Transverse colon (tissue), 4 donors: ENCODE measurements at regions of chr11 and their contacts with region 1.

Region 1: DNA sequence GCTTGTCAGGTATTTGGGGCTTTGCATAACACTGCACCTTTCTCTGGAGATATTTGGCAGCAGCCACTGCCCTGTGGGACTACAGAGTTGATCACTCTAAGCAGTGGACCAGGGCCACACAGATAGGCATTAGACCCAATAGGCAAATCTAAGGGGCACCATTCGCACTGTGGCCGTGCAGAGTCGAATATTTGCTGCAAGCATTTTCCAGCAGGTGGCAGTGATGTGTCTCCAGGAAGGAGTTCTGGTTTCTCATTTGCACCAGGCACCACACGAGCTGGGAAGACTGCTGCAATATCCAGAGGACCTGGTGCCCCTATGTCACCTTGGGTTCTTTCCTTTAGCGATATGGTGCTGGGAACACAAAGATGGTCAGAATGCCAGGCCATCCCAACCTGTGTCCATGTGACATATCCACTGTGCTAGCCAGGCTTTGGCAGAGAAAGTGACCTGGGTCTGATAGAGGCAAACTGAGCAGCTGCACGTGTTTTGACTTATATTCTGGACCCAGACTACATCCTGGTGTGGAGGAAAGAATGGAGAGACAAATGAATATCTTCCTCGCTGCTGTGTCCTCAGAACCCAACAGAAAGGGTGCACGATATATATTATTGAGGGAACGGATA is 318.7 kb downstream of the BUD13 start:
- DNase-seq: peak; percentile 60
- H3K4me3 ChIP-seq: no peak overlapping the region
- H3K27ac ChIP-seq: no peak overlapping the region
- H3K4me1 ChIP-seq: peaks cover 2 to 21% (median 7%) of the 10 kb centered on the region in 4 donors
- H3K27me3 ChIP-seq: no peaks in the 10 kb centered on the region
- CTCF ChIP-seq: peak; percentile 50 to 68 (median 63)
- EP300 ChIP-seq: no peak
- POLR2A ChIP-seq: no peak

Region 2: DNA sequence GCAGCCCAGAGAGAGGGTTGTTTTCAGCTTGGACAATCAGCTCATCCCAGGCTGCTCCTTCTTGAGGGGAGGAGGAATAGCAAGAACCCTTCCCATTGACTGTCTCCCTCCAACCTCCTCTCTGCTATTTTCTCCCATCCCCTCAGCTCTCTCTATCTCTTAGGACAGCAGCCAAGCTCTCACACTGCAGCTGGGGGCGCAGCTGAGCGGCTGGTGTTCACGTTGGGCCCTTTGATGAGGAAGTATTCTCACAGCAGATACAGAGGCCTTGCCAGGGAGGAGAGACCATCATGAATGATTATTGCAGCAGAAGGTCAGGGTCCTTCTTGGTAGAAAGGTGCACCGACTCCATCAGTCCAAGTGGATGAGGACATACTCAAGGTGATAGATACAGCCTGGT is 923.4 kb before region 1 on chr11:
- in situ Hi-C with region 1: no loop called
- intact Hi-C with region 1: no loop called
- DNase-seq: no peak
- H3K4me3 ChIP-seq: no peak overlapping the region
- H3K27ac ChIP-seq: no peak overlapping the region
- H3K4me1 ChIP-seq: peaks cover 0 to 6% (median 0%) of the 10 kb centered on the region in 4 donors
- H3K27me3 ChIP-seq: no peaks in the 10 kb centered on the region
- CTCF ChIP-seq: no peak
- EP300 ChIP-seq: no peak
- POLR2A ChIP-seq: no peak

Region 3: DNA sequence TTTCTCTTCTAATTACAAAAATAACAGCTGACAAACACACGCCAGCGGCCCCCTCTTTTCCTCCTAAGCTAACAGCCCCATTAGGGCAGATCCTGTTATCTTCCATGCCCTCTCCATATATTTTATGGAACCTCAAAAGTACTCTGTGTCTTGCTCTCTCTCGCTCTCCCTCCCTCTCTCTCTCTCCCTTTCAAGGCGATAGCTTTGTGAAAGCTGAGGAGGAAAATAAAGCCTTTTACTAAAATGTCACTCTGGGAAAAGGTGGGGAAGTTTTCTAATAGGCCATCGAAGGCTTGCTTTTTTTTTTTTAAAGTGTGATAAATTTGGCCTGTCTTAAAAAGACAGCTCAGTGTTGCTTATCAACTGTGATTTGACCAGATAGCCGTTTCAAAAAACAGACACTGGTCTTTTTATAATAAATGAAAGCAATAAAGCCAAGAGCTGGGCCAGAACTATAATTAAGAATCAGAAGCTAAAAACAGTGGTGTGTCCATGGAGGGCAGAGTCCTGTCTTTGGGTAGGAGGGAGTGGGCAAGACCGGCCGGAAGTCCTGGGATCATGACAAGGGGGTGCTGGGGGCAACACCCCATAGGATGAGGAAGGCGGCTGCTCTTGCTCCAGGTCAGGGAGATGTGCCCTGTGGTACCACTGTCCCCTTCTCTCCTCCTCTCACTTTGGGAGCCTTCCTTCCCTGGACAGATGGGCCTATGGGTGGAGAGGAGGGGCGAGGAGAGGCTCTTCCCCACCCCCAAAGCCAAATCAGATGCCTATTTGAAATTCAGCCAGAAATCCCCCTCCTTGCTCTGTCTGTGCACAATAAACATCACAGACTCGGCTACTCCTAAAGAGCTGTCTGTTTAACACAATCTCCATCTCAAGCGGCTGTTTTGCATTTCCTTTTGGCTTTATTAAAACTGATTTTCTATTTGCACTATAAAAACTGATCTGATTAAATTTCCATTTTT is 51.4 kb after region 1 on chr11:
- in situ Hi-C with region 1: no loop called
- intact Hi-C with region 1: loop called (anchors 2 kb)
- DNase-seq: no peak
- H3K4me3 ChIP-seq: no peak overlapping the region
- H3K27ac ChIP-seq: no peak overlapping the region
- H3K4me1 ChIP-seq: no peaks in the 10 kb centered on the region
- H3K27me3 ChIP-seq: peaks cover 25% of the 10 kb centered on the region
- CTCF ChIP-seq: no peak
- EP300 ChIP-seq: no peak
- POLR2A ChIP-seq: no peak

Region 4: GRCh38 chr11:116691771-116692177 is 237.6 kb after region 1 on chr11:
- in situ Hi-C with region 1: no loop called
- intact Hi-C with region 1: loop called (anchors 5 kb)
- DNase-seq: peak; percentile 44
- H3K4me3 ChIP-seq: no peak overlapping the region
- H3K27ac ChIP-seq: no peak overlapping the region
- H3K4me1 ChIP-seq: peaks cover 0 to 7% (median 2%) of the 10 kb centered on the region in 4 donors
- H3K27me3 ChIP-seq: no peaks in the 10 kb centered on the region
- CTCF ChIP-seq: peak; percentile 79 to 87 (median 81)
- EP300 ChIP-seq: no peak
- POLR2A ChIP-seq: no peak